H1 (cell line): ENCODE measurements at regions of chr17 and their contacts with region 1.

Region 1: DNA sequence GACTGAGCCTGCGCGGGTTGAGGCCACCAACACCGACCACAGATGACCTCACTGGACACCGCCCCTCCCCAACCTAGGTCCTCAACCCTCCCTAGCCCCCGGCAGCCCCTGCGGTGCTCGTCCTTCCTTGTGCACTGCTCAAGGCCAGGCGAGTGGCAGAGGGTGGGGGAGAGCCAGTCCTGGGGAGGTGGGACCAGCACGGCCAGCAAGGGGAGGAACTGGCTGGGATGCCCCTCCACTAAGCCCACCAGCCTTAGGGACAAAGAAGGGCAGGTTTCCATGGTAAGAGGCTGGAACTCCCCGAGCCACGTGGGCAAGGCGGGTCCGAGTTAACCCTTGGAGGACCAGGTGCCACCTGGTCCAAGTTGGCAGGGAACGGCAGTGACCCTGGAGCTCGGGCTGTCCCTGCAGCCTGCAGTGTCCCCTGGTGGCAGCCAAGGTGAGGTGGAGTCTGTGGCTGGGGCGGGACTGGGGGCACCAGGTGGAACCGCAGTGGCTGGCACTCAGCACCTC is 9.2 kb downstream of the FSCN2 start:
- DNase-seq: peak in 1 of 2 experiments; percentile 86
- H3K4me3 ChIP-seq: peak overlapping the region in 1 of 4 experiments; percentile 51; a peak in 4 of 8 replicates
- H3K27ac ChIP-seq: no peak overlapping the region
- H3K4me1 ChIP-seq: peaks cover 0 to 11% (median 5%) of the 10 kb centered on the region in 4 experiments; a peak in 5 of 7 replicates
- H3K27me3 ChIP-seq: peaks cover 8 to 28% (median 24%) of the 10 kb centered on the region in 4 experiments; a peak in 6 of 7 replicates
- CTCF ChIP-seq: peak; percentile 91 to 97 (median 94)
- EP300 ChIP-seq: no peak
- POLR2A ChIP-seq: no peak; a peak in 1 of 3 replicates
- RAD21 ChIP-seq: peak; percentile 86 to 91

Region 2: DNA sequence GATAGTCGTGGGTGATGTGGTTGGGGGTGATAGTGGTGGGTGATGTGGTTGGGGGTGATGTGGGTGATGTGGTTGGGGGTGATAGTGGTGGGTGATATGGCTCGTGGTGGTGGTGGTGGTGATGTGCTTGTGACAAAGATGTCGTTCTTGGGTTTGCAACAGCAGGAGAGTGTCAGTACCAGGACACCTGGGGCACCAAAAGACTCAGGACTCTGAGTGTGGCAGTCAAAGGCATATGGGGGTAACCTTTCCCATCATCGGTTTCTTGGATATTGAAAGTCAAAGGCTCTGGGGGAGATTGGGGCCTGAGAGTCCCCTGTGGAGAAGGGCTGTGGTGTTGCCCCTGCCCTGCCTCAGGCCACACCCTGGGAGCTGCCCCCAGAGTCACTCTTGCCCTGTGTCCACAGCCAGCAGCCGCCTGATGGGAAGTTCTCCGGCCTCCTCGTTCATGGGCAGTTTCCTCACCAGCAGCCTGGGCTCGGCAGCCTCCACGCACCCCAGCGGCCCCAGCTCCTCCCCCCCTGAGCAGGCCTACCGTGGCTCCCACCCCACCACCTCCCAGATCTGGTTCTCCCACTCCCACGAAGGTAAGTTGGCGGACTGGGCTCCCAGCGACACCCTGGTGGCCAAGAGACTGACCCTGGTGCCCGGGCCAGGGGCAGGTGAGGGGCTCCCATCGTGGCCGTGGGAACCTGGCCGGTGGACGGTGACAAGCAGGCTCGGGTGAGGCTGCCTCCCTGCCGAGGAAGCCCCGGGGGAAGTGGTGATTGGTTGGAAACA is 110.8 kb before region 1 on chr17:
- CTCF ChIA-PET with region 1: no interaction called
- POLR2A ChIA-PET with region 1: no interaction called
- DNase-seq: no peak
- H3K4me3 ChIP-seq: no peak overlapping the region
- H3K27ac ChIP-seq: no peak overlapping the region
- H3K4me1 ChIP-seq: peaks cover 0 to 9% (median 6%) of the 10 kb centered on the region in 4 experiments; a peak in 5 of 7 replicates
- H3K27me3 ChIP-seq: no peaks in the 10 kb centered on the region; a peak in 1 of 7 replicates
- CTCF ChIP-seq: no peak
- EP300 ChIP-seq: no peak
- POLR2A ChIP-seq: no peak
- RAD21 ChIP-seq: no peak

Region 3: DNA sequence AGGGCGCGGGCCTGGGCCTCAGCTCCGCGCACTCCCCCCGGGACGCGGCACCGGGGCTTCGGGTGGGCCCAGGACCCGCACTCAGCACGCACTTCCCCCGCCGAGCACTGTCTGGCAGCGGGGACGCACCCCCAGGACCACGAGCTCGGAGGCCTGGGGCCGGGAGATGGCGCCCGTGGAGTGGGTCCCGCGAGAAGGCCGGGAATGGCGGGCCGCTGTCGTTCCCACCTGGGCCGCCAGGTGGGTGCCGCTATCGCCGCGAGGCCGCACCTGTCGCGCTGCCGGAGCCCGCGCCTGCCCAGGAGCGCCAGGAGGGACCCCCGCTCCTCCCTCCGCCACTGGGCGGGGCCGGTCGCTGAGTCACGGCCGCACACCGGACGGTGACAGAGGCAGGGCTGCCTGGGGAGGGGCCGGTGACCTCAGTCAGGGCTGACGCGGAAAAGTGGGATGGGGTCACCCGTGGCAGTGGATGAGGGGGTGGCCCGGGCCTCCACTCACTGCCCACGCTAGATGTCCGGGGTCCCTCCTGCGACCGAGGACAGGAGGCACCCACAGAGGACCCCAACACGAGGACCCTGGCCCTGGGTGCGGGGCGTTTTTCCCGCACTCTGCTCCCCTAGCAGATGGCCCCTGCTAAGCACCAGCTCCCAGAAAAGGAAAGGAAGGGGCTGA is 18.0 kb before region 1 on chr17:
- CTCF ChIA-PET with region 1: interaction called, 33 read pairs
- POLR2A ChIA-PET with region 1: interaction called, 125 read pairs
- DNase-seq: peak in 1 of 2 experiments; percentile 69
- H3K4me3 ChIP-seq: peak overlapping the region; percentile 43 to 73 (median 46)
- H3K27ac ChIP-seq: no peak overlapping the region
- H3K4me1 ChIP-seq: peaks cover 0 to 54% (median 30%) of the 10 kb centered on the region in 4 experiments; a peak in 6 of 7 replicates
- H3K27me3 ChIP-seq: peaks cover 0 to 43% (median 27%) of the 10 kb centered on the region in 4 experiments; a peak in 5 of 7 replicates
- CTCF ChIP-seq: peak; percentile 30 to 60 (median 51)
- EP300 ChIP-seq: no peak
- POLR2A ChIP-seq: no peak
- RAD21 ChIP-seq: peak in 1 of 2 experiments; percentile 35; a peak in 3 of 4 replicates

Region 4: GRCh38 chr17:81579821-81580321 is 42.5 kb after region 1 on chr17:
- CTCF ChIA-PET with region 1: no interaction called
- POLR2A ChIA-PET with region 1: no interaction called
- DNase-seq: no peak
- H3K4me3 ChIP-seq: no peak overlapping the region
- H3K27ac ChIP-seq: no peak overlapping the region
- H3K4me1 ChIP-seq: no peaks in the 10 kb centered on the region
- H3K27me3 ChIP-seq: no peaks in the 10 kb centered on the region
- CTCF ChIP-seq: no peak
- EP300 ChIP-seq: no peak
- POLR2A ChIP-seq: no peak
- RAD21 ChIP-seq: no peak